ENCODE measurements at regions of chr14 and their contacts with region 1.

Region 1: DNA sequence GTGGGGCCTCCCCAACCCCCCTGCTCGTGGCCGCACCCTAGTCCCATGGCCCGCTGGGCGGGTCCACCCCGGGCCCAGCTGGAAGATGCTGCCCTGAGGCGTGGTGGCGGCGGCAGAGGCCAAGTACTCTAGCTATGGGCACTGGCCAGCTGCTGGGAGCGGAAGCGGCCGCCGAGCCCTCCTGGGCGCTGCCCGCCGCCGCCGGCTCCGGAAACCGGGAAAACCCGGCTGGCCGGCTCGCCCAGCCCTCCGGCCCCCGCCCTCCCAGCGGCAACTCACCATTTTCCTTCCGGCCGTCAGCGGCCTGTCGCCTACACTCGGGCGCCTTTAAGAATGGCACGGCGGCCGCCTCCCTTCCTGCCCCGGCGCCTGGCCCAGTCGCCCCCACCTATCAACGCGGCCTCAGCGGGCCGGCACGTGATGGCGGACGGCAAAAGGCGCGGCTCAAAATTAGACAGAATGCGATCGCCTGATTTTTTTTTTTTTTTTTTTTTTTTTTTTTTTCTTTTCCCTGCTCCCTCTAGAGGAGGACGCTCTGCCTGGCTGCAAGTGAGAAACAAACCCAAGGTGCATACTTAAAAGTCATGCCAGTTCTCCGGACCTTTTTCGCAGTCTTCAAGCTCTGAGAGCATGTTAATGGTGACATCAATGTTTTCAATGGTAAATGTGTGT is at the start of gene GMFB:
- DNase-seq: peak; percentile 55
- H3K4me3 ChIP-seq: peak within 1 kb of the TSS; percentile 96
- CTCF ChIP-seq: peak; percentile 30

Region 2: DNA sequence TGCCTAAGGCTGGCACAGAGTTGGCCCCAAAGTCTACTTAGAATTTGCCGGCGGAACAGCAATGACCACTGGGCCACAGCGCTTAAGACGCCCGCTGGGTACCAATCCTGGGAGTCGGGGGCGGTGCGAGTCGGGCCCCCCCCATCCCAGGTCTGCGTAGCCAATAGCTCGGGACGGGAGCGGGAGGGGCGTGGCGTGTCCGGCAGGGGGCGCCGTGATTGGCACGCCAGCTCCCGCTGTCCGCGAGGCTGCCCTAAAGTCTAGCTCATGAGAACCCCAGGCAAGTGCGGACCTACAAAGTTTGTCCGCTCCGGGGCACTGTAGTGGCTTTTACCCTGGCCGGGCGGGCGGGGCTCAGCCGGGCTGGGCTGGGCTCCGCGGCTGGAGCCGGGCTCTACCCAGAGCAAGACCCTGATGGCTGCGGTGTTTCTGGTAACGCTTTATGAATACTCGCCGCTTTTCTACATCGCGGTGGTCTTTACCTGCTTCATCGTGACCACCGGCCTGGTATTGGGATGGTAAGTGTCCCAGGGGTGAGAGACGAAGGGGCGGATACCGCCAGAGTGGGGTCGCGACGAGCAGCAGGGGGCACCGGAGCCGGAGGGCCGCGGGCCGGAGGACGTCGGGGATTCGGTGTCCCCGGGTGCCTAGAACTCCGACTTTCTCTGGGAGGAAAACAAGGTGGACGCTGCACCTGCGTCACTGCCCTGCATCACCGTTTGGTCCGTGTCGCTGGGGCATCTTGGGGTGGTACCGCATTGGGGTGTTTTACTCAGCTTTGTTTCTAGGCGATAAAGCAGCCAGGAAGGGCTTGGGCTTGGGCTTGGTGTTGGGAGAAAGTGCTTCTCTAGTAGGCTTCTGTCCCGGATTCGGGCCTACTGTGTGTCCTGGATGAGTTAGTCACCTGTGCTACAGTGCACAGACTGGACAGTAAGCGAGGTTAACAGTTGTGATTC is 21.0 kb after region 1 on chr14 and contains the start of gene CGRRF1:
- CTCF ChIA-PET with region 1: interaction called, 113 read pairs
- POLR2A ChIA-PET with region 1: interaction called, 3 read pairs
- DNase-seq: peak; percentile 89
- H3K4me3 ChIP-seq: peak within 1 kb of the TSS; percentile 98
- CTCF ChIP-seq: peak; percentile 77